ENCODE measurements at regions of chr3 and their contacts with region 1.

Region 1: DNA sequence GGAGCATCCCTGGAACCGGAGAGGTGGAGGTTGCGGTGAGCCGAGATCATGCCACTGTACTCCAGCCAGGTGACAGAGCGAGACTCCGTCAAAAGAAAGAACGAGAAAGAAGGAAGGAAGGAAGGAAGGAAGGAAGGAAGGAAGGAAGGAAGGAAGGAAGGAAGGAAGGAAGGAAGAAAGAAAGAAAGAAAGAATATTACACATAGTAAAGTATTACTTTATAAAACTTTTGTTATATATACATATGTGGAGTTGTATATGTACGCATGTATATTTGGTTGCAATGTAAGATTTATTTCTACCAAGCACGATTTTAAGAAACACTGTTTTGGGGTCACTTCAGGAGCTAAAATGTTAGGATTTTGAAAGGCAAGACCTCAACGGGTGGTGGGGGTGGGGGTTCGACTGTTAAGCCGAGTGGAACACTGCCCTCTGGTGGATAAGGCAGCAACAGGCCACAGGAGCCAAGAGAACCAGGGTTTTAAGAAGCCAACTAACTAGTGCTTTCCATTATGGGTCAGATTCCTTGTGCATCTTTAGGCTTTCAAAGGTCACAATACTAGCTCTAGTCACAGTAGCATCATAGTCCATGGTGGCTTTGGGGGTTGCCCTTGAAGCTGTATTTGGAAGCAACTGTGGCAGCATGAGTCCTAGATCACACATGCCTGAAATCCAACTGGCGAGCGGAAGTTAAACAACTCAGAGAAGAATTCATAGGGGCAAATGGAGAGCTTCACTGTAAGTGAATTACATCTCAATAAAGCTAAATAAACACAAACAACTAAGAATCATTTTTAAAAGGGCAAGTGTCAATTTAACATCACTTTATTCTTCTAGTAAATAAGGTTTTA is 22.5 kb downstream of the GLB1 start:
- DNase-seq: peak; percentile 43
- H3K4me3 Mint-ChIP-seq: no peak overlapping the region
- H3K27ac Mint-ChIP-seq: no peak overlapping the region
- H3K4me1 Mint-ChIP-seq: peaks cover 42% of the 10 kb centered on the region
- H3K27me3 Mint-ChIP-seq: no peaks in the 10 kb centered on the region

Region 2: DNA sequence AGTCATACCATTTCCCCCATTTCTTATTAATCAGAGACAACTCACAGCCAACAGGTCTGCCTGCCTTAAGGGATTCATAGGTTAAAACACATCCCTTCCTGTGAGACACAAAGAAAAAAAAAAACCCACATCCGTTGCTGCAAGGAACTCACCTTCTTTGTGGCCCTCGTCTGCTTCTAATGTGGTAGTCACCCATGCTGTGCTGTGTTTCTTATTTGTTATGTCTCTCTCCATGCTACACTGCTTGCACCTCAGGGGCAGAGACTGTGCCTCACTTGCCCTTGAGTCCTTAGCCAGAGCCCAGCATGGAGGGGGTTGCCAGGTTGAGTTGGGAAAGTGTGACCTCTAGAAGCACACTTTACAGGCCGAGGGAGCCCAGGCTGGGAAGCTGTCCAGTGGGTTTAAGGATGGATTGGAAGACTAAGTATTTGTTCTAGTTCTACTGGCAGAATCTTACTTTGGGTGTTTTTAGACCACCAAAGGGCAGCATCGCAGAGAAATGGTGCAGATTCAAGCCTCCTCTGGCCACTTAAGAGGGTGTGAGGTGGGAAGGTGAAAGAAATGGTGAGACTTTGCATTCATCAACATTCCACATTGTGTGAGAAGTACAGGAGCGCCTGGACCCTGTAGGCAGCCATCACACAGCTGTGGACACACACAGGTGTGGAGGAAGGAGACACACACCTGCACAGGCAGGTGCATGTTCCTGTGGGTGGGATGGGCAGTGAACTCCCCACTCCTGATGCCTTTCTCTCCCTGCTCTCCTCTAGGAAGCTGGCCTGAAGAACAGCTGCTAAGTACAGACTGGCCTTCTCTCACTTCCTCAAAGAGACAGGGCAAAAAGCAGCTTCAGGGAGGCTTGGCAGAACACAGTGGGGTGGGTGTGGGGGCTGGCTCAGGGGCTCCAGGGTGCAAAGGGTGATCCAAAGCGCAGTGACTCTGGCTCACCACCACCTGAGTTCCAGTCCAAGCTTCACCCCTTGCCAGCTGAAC is 26.3 kb before region 1 on chr3:
- intact Hi-C with region 1: loop called (anchors 1 kb)
- DNase-seq: peak; percentile 70
- H3K4me3 Mint-ChIP-seq: peak overlapping the region; percentile 80
- H3K27ac Mint-ChIP-seq: peak overlapping the region; percentile 99
- H3K4me1 Mint-ChIP-seq: peaks cover 81% of the 10 kb centered on the region
- H3K27me3 Mint-ChIP-seq: peaks cover 1% of the 10 kb centered on the region